ENCODE measurements at regions of chr6 and their contacts with region 1.

Region 1: GRCh38 chr6:63352587-63353285 is 33.0 kb upstream of the LGSN start:
- DNase-seq: peak; percentile 19

Region 2: GRCh38 chr6:63426844-63427243 is 74.1 kb after region 1 on chr6:
- CTCF ChIA-PET with region 1: no interaction called
- POLR2A ChIA-PET with region 1: no interaction called
- DNase-seq: no peak

Region 3: DNA sequence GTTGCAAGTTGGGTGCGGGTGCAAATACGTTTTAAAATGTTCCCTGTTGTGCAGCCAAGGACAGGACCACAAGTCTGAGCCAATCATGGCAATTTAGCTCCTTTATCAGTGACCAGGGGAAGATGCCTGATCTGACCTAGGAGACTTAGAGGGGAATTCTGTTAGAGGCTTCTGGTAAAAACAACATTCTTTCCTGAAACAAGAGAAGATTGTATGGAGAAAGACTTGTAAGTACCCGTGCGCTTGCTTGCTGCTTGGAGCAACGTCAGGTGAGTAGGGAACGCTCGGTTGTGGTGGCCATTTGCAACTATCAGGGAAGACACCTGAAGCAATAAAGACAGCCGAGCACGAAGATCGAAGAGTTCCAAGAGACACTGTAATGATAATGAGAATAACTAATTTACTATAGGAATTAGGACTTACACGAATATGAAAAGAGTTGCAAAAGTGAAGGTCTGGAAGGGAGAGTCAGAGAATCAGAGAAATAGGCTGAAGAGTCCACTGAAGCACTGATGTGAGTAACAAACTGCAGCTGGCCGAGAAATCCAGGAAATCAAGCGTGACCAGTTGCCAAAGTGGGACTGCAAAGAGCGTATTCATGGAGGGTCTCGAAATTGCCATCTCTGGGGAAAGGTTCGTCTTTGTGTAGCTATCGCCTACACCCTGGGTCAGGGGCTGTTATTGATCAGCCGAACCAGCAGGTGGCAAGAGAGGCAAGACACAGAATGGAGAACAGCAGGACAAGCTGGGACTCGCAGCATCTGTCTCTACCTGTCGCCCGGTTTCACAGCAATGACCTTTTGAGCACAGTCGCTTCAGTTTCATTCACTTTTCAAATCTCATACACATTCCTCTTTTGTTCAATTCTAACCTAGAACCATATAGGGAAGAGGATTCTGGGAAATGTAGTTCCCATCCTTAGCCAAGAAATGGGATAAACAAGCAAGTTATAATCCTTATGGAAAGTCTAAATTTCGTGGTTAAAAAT is 245.6 kb after region 1 on chr6:
- CTCF ChIA-PET with region 1: interaction called, 10 read pairs
- POLR2A ChIA-PET with region 1: no interaction called
- DNase-seq: peak; percentile 76

Region 4: DNA sequence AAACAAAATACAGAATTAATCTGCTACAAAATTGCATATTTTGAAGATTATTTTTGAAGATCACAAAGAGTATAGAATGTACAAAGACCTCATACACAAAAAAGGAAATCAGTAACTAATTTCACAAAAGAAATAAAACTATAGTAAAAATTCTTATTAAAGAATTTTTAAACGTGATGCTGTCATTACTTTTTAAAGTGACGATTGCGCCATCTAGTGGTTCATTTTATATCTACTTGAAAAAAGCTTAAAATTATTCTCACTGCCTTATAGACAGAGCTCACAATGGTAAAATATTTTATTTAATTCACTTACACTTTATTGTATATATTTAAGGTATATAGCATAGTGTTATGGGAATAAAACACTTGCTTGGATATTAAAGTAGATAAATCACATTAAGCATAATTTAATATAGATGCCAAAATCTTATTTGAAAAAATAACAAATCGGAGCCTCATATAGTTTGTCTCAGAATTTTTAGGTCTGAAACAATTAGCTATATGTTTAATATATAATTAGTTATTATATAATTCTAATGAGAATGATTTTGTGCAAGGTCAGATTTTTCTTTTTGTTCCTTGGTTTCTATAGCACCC is 411.7 kb after region 1 on chr6:
- CTCF ChIA-PET with region 1: interaction called, 12 read pairs
- POLR2A ChIA-PET with region 1: no interaction called
- DNase-seq: no peak

Measured in HEK293T (cell line).